Aorta (tissue), 5 donors: ENCODE measurements at regions of chr12 and their contacts with region 1.

Region 1: GRCh38 chr12:54279866-54280467 is at the start of gene CBX5:
- DNase-seq: peak; percentile 100
- ATAC-seq: peak; percentile 94
- H3K4me3 ChIP-seq: peak within 1 kb of the TSS; percentile 80 to 99
- H3K27ac ChIP-seq: peak within 1 kb of the TSS; percentile 46 to 93
- H3K4me1 ChIP-seq: no peaks in the 10 kb centered on the region
- H3K27me3 ChIP-seq: no peaks in the 10 kb centered on the region
- total RNA-seq, gene CBX5: 66.8 to 67.8 TPM

Region 2: GRCh38 chr12:54240971-54241588 is 38.9 kb before region 1 on chr12:
- intact Hi-C with region 1: no loop called
- DNase-seq: no peak
- ATAC-seq: no peak
- H3K4me3 ChIP-seq: no peak overlapping the region
- H3K27ac ChIP-seq: no peak overlapping the region
- H3K4me1 ChIP-seq: no peaks in the 10 kb centered on the region
- H3K27me3 ChIP-seq: no peaks in the 10 kb centered on the region

Region 3: GRCh38 chr12:54324617-54325441 is 44.9 kb after region 1 on chr12 and contains the start of gene COPZ1:
- intact Hi-C with region 1: loop called in 1 of 2 experiments (anchors 1 kb)
- DNase-seq: peak; percentile 96 to 97
- ATAC-seq: peak; percentile 98
- H3K4me3 ChIP-seq: peak within 1 kb of the TSS; percentile 88 to 96
- H3K27ac ChIP-seq: peak within 1 kb of the TSS in 1 of 2 donors; percentile 85
- H3K4me1 ChIP-seq: no peaks in the 10 kb centered on the region
- H3K27me3 ChIP-seq: no peaks in the 10 kb centered on the region
- total RNA-seq, gene COPZ1: 71.5 to 72.1 TPM

Region 4: GRCh38 chr12:54439521-54440255 is 159.7 kb after region 1 on chr12:
- intact Hi-C with region 1: no loop called
- DNase-seq: no peak
- ATAC-seq: peak; percentile 92
- H3K4me3 ChIP-seq: no peak overlapping the region
- H3K27ac ChIP-seq: no peak overlapping the region
- H3K4me1 ChIP-seq: peaks cover 0 to 5% of the 10 kb centered on the region in 2 donors
- H3K27me3 ChIP-seq: no peaks in the 10 kb centered on the region